RWPE1 (cell line): ENCODE measurements at regions of chr2 and their contacts with region 1.

Region 1: GRCh38 chr2:37394796-37395555 is 50.5 kb downstream of the QPCT start:
- DNase-seq: no peak
- H3K27ac ChIP-seq: no peak overlapping the region
- CTCF ChIP-seq: no peak

Region 2: DNA sequence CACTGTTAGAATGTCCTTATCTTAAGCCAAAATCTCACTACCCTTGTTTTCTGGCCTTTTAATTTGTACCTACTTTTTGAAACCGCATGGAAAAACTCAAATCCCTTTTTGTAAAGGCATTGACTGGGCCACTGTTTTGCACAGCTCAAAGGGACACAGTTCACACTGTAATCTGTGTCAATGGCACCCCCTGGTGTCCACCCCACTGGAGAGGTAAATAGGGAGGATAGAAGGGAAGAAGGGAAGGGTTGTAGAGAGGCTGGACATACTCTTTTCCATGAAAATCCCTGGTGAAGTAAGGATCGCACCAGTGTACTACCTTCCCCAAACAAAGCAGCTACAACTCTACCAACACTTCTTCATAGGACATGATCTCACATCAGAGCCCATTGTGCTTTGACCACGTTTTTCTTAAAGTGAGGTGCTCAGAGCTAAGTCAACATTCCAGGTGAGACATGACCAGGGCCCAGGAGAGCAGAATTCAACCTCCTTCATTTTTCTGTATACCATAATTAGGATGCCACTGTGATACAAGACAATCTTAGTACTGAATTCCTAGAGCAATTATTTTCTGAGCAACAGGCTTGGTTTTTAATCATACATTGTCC is 437.7 kb after region 1 on chr2:
- CTCF ChIA-PET with region 1: interaction called, 18 read pairs
- POLR2A ChIA-PET with region 1: no interaction called
- DNase-seq: peak; percentile 80
- H3K27ac ChIP-seq: no peak overlapping the region
- CTCF ChIP-seq: peak; percentile 66

Region 3: DNA sequence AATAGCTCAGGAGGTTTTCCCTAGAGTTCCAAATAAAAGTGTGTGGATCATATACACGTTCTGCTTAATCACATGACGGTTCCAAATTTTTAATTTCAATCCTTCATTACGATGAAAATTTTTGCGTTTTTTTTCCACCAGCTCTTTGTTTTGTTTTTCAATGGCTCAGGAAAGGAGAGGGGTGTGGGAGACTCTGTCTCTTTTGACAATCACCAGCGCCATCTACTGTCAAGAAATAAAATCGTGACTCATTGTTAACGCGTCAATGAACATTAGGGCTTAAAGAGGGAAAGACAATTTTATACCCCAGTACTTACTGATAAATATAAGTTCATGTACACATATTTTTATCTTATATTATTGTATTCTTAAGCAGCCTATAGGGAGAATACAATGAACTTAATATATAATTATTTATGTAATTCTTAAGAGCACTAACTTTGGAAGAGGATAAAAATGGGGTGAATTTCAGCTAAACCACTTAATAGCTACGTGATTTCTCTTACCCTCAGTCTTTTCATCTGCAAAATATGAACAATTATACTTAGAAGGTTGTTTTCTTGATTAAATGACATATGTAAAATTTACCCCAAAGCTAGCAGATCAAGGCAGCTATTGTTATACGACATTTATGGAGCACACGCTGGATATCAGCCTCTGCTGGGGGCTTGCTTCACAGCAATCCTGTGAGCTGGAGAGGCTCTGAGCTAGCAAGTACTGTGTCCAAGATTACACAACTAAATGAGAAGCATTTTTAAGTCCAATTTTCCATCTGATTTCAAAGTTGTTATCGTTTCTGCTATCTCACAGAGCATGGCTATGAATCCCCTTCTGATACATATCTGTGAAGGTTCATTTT is 482.7 kb after region 1 on chr2:
- CTCF ChIA-PET with region 1: interaction called, 60 read pairs
- POLR2A ChIA-PET with region 1: no interaction called
- DNase-seq: peak; percentile 67
- H3K27ac ChIP-seq: no peak overlapping the region
- CTCF ChIP-seq: peak; percentile 74